AG04449 (cell line): ENCODE measurements at regions of chr1 and their contacts with region 1.

Region 1: GRCh38 chr1:201009962-201010645 is 13.4 kb downstream of the KIF21B start:
- DNase-seq: no peak
- H3K4me3 ChIP-seq: no peak overlapping the region
- CTCF ChIP-seq: no peak

Region 2: DNA sequence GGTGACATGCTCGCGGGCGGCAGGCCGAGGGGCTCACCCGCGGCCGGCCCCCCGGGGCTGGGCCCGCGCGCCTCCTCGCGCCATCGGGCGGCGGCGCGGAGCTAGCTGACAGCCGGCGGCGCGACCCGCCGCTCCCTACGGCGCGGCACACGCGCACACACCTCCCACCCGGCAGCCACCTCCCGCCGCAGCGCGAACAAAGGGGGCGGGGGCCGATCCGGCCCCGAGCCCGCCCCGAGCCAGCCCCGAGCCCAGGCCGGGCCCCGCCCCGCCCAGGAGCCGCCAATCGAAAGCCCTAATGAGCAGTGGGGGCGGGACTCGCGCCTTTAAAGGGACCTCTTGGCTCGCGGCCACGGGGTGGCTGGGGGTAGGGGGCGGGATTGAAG is 13.4 kb after region 1 on chr1 and contains the start of gene KIF21B:
- CTCF ChIA-PET with region 1: interaction called, 15 read pairs
- POLR2A ChIA-PET with region 1: no interaction called
- DNase-seq: no peak
- H3K4me3 ChIP-seq: peak within 1 kb of the TSS; percentile 64
- CTCF ChIP-seq: no peak